Heart right ventricle (tissue), 16 donors: ENCODE measurements at regions of chr10 and their contacts with region 1.

Region 1: DNA sequence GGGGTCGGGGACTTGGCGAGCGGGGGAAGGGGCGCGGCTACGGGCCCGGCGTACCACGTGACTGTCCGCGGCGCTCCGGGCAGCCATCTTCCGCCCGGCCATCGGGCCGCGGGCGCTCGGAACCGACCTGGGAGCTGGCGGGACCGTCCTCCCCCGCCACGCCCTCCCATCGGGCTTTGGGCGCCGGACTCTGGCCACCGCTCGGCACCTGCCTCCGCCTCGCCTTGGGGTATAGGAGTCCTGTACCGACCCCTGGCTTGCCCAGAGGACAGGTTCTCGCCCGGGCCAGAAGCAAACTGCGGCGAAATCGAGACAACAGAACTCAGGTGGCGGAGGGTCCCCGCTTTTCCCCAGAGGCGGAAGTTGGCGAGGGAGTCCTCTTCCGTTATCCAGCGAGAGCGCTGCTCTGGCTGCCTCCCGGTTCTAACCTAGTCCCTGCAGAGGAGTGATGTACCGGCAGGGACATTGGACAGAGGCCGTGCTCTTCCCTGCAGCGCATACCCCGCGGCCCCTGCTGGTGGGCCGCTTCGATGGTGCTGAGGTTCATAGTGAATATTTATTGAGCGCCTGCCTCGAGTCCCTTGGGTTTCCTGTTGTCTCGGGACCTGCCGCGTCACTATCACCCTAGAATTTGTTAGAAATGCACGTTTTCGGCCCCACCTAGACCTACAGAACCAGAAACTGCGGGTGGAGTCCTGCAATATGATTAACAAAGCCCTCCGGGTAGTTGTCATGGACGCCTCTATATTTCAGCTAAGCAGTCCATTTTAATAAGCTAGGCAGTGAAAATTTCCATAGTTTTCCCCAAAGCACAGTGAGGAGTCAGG is 1.3 kb upstream of the SGMS1 start:
- DNase-seq: peak; percentile 54 to 61
- ATAC-seq: peak; percentile 68 to 86 (median 75)
- H3K4me3 ChIP-seq: peak overlapping the region; percentile 45 to 99 (median 89)
- H3K27ac ChIP-seq: peak overlapping the region; percentile 98 to 100 (median 99)
- H3K4me1 ChIP-seq: peaks cover 0 to 30% (median 29%) of the 10 kb centered on the region in 9 donors
- H3K27me3 ChIP-seq: no peaks in the 10 kb centered on the region
- CTCF ChIP-seq: peak; percentile 21 to 76 (median 63)

Region 2: GRCh38 chr10:50325449-50326171 is 299.5 kb before region 1 on chr10:
- intact Hi-C with region 1: loop called in 2 of 10 experiments (anchors 5 to 10 kb)
- DNase-seq: peak; percentile 15 to 34
- ATAC-seq: peak; percentile 36 to 91 (median 84)
- H3K4me3 ChIP-seq: peak overlapping the region in 6 of 10 donors; percentile 10 to 44 (median 36)
- H3K27ac ChIP-seq: peak overlapping the region; percentile 2 to 85 (median 71)
- H3K4me1 ChIP-seq: peaks cover 5 to 80% (median 51%) of the 10 kb centered on the region in 9 donors
- H3K27me3 ChIP-seq: no peaks in the 10 kb centered on the region
- CTCF ChIP-seq: no peak

Region 3: DNA sequence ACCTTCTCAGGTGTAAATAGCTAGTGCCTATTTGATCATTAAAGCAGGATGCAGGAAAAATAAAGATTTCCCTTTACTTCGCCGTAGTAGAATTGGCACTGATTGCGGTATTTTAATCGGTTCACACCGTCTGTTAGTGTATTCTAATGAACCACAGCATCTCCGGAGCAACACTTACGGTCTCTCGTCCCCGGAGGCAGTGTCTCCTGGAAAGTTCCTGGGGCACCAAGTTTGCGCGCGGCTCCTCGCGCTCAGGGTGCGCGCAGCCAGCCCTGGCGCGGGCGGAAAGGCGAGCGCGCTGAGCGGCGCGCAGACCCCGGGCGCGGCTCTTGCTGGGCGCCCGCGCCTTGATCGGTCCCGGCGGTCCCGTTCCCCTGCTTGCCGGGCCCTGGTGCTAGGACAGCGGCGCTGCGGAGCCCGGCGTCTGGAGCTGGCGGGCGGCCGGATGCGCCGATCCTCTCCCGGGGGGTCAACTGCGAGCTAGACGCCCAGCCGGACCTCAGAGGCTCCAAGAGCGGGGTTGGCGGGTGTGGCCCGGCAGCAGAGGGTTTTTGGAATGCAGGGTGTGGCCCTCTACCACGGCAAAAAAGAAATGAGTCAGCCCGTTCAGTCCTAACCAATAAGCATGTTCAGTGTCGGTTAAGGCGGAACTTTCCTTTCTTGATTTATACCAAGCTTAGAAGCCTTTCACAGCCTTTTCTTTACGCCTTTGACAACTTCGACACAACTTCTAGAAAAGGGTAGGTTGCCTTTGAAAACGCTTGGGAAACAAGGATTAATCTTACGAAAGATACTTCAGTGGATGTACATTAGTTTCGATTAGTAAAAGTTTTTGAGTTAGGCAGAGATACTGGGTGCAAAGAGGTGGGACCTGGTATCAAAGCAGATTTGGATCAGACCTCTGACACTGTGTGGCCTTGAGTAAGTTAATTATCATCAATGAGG is 206.9 kb before region 1 on chr10:
- intact Hi-C with region 1: loop called (anchors 1 to 10 kb)
- DNase-seq: peak; percentile 70 to 79
- ATAC-seq: peak; percentile 86 to 97 (median 92)
- H3K4me3 ChIP-seq: peak overlapping the region; percentile 44 to 80 (median 68)
- H3K27ac ChIP-seq: peak overlapping the region; percentile 34 to 91 (median 82)
- H3K4me1 ChIP-seq: peaks cover 0 to 82% (median 35%) of the 10 kb centered on the region in 9 donors
- H3K27me3 ChIP-seq: no peaks in the 10 kb centered on the region
- CTCF ChIP-seq: peak in 2 of 9 donors; percentile 21 to 29

Region 4: DNA sequence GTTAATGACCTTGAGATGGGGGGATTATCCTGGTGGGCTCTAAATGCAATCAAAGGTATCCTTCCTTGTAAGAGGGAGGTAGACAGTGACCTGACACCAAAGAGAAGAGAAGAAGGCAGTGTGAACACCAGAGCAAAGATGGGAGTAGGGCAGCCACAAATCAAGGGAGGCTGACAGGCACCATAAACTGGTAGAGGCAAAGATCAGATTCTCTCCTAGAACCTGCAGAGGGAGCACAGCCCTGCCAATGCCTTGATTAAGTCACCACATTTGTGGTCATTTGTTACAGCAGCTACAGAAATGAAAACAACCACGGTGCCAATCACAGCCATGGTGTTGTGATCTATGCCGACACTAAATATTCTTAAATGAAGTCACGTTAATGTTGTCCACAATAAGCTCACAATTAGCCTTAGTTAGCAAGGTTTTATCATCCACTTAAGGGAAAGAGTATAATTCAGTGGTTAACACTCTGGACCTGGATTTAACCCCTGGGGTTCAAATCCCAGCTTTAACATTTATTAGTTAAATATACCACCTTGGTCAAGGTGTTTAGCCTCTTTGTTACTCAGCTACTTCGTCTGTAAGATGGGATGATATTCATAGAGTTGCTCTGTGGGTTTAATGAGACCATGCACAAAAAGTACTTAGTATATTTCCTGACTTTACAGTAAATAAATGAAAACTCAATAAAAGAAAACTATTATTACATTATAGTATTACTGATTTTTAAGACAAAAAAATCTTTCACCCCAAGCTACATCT is 72.1 kb before region 1 on chr10:
- intact Hi-C with region 1: loop called in 8 of 10 experiments (anchors 2 to 5 kb)
- DNase-seq: no peak
- ATAC-seq: no peak
- H3K4me3 ChIP-seq: no peak overlapping the region
- H3K27ac ChIP-seq: peak overlapping the region in 6 of 10 donors; percentile 11 to 74 (median 44)
- H3K4me1 ChIP-seq: peaks cover 11 to 86% (median 71%) of the 10 kb centered on the region in 9 donors
- H3K27me3 ChIP-seq: no peaks in the 10 kb centered on the region
- CTCF ChIP-seq: peak in 5 of 9 donors; percentile 9 to 41 (median 30)

Region 5: DNA sequence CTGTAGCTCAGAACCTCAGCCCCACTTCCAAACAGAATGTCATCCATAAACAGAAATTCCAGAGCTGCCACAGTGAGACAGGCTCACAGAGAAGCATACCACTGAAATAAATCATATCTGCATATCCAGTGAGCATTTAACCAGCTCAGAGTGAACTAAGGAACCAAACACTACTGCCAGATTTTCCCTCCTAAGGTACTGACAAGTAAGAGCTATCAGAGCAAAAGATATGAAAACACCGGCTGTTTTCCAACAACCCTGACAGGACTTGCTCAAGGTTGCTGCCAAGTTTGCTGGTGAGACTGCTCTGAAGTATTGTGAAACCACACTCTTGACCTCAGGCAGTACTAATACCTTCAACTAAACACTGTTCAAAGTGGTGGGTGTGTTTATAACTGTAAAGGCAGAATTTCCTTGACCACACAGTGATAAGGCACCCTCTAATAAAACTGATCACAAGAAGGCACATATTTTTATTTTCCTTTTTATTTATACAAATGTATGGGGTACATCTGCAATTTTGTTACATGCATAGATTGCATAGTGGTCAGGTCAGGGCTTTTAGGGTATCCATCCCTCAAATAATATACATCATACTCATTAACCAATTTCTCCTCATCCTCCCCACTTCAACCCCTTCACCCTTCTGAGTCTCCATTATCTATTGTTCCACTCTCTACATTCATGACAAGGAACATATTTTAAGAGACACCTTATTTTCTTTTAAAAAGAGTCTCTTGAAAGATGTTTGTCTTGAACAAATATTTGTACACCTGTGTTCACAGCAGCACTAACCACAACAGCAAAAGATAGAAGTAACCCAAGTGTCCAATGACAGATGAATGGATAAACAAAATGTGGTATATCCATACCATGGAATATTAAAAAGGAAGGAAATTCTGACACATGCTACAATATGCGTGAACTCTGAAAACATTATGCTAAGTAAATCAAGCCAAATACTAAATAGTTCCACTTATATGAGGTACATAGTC is 19.5 kb before region 1 on chr10:
- intact Hi-C with region 1: no loop called
- DNase-seq: peak in 1 of 2 donors; percentile 43
- ATAC-seq: peak; percentile 70 to 96 (median 78)
- H3K4me3 ChIP-seq: peak overlapping the region in 5 of 10 donors; percentile 2 to 40 (median 11)
- H3K27ac ChIP-seq: peak overlapping the region in 9 of 10 donors; percentile 42 to 81 (median 59)
- H3K4me1 ChIP-seq: peaks cover 0 to 84% (median 71%) of the 10 kb centered on the region in 9 donors
- H3K27me3 ChIP-seq: no peaks in the 10 kb centered on the region
- CTCF ChIP-seq: no peak

Region 6: GRCh38 chr10:50636618-50637579 is 11.8 kb after region 1 on chr10:
- intact Hi-C with region 1: loop called in 1 of 10 experiments (anchors 1 kb)
- DNase-seq: no peak
- ATAC-seq: no peak
- H3K4me3 ChIP-seq: no peak overlapping the region
- H3K27ac ChIP-seq: no peak overlapping the region
- H3K4me1 ChIP-seq: peaks cover 0 to 11% (median 0%) of the 10 kb centered on the region in 9 donors
- H3K27me3 ChIP-seq: no peaks in the 10 kb centered on the region
- CTCF ChIP-seq: no peak

Region 7: GRCh38 chr10:51620131-51620530 is 995.1 kb after region 1 on chr10:
- intact Hi-C with region 1: no loop called
- DNase-seq: no peak
- ATAC-seq: no peak
- H3K4me3 ChIP-seq: no peak overlapping the region
- H3K27ac ChIP-seq: no peak overlapping the region
- H3K4me1 ChIP-seq: peaks cover 0 to 7% (median 0%) of the 10 kb centered on the region in 9 donors
- H3K27me3 ChIP-seq: no peaks in the 10 kb centered on the region
- CTCF ChIP-seq: no peak